MCF 10A (cell line): ENCODE measurements at regions of chr12 and their contacts with region 1.

Region 1: GRCh38 chr12:8890313-8891085 is 23.8 kb upstream of the PHC1 start:
- DNase-seq: peak; percentile 67
- H3K4me3 Mint-ChIP-seq: peak overlapping the region; percentile 83
- H3K27ac Mint-ChIP-seq: peak overlapping the region; percentile 86
- H3K4me1 Mint-ChIP-seq: peaks cover 6% of the 10 kb centered on the region
- H3K27me3 Mint-ChIP-seq: no peaks in the 10 kb centered on the region
- CTCF ChIP-seq: peak; percentile 82

Region 2: DNA sequence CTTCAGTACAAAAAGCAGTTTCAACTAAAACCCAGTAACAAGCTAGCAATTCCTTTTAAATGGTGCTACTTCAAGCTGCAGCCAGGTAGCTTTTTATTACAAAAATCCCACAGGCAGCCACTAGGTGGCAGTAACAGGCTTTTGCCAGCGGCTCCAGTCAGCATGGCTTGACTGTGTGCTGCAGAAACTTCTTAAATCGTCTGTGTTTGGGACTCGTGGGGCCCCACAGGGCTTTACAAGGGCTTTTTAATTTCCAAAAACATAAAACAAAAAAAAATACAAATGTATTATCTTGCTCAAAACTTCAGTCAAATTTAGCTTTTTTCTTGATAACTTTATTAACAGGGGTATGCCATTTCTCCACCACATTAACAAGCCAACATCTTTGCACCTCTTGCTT is 346.2 kb before region 1 on chr12:
- CTCF ChIA-PET with region 1: interaction called, 14 read pairs
- POLR2A ChIA-PET with region 1: no interaction called
- intact Hi-C with region 1: loop called (anchors 5 kb)
- DNase-seq: peak; percentile 56
- H3K4me3 Mint-ChIP-seq: no peak overlapping the region
- H3K27ac Mint-ChIP-seq: no peak overlapping the region
- H3K4me1 Mint-ChIP-seq: no peaks in the 10 kb centered on the region
- H3K27me3 Mint-ChIP-seq: peaks cover 58% of the 10 kb centered on the region
- CTCF ChIP-seq: peak; percentile 84

Region 3: DNA sequence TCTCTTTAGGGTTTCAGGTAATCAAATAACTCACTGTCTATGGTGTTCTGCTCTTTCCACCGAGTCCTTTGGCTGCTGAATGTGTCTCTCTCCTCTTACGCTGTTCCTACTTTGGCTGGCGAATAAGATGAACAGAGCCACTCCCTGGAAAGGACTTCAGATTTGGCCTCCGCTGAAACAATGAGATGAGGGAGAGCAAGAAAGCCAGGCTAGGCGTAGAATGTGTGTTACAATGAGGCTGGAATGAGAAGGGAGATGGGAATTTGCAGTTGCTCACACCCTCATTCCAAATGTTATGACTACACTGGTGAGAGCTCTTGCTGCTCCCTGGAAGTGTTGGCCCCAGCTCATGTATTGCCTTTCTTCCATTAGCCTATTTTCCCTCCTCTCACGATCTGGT is 227.9 kb before region 1 on chr12 and contains the start of gene MFAP5:
- CTCF ChIA-PET with region 1: interaction called, 57 read pairs
- POLR2A ChIA-PET with region 1: no interaction called
- intact Hi-C with region 1: loop called (anchors 1 kb)
- DNase-seq: no peak
- H3K4me3 Mint-ChIP-seq: no peak within 1 kb of the TSS
- H3K27ac Mint-ChIP-seq: no peak within 1 kb of the TSS
- H3K4me1 Mint-ChIP-seq: peaks cover 5% of the 10 kb centered on the region
- H3K27me3 Mint-ChIP-seq: no peaks in the 10 kb centered on the region
- CTCF ChIP-seq: no peak
- total RNA-seq, gene MFAP5: 0.64 and 1.6 TPM in 2 replicates

Region 4: DNA sequence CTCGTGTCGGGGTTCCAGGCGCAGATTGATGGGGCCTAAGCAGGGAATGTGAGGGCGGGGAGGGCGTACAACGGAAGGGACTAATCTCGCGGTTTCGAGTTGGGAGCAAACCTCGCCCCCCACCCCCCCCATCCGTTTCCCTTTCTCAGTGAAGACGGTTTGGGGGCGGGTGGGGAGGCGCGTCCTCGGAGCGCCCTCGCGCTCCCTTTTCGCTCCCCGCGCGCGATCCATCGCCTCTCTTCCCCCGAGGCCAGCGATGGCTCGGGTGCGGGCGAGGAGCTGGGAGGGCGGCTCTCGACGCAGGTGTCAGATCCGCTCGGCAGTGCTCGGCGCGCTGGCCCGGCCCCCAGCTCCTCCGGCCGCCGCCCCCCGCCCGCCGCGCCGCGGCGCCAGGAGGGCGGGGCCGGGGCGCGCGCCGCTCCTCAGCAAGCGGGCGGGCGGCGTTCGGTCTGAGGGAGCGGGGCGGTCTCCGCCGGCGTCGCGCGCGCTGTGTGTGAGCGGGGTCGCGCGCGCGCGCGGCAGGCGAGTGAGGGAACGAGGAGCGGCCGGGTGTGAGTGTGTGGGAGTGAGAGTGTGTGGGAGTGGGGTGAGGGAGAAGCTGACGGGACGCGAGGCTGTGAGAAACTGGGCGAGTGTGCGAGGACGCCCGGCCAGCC is 192.9 kb before region 1 on chr12 and contains the start of gene RIMKLB:
- CTCF ChIA-PET with region 1: interaction called, 12 read pairs
- POLR2A ChIA-PET with region 1: no interaction called
- intact Hi-C with region 1: no loop called
- DNase-seq: peak; percentile 60
- H3K4me3 Mint-ChIP-seq: peak within 1 kb of the TSS; percentile 93
- H3K27ac Mint-ChIP-seq: peak within 1 kb of the TSS; percentile 46
- H3K4me1 Mint-ChIP-seq: peaks cover 13% of the 10 kb centered on the region
- H3K27me3 Mint-ChIP-seq: no peaks in the 10 kb centered on the region
- CTCF ChIP-seq: no peak
- total RNA-seq, gene RIMKLB: 32.7 and 34.4 TPM in 2 replicates

Region 5: DNA sequence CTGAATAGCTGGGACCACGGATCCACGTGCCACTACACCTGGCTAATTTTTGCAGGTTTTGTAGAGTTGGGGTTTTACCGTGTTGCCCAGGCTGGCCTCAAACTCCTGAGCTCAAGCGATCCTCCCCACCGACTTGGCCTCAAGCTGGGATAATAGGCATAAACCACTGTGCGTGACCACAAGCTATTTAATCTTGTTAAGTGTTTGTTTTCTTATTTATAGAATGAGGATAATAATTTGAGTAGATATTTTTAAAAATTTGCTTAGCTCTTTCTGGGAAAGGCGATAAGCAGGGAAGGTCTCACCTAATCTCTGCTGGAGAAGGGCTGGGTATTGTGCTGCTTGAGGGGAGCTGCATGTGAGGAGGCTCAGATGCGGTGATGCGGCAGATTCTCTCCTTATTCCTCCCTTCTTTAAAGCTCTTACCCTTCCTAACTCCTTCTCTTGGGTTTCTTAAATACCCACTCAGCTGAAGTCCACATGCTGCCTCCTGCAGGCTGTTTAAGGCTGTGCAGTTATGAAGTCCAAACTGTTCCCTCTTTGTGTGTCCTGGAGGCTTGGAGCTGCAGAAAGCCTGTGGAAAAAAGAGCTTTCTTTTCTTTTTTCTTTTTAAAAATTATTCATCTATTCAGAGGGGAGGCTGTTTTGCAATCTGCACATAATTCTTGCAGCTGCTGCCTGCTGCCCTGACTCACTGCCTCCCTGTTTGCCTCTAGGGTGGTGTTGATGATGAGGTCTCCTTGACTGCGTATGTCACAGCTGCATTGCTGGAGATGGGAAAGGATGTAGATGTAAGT is 30.1 kb before region 1 on chr12:
- CTCF ChIA-PET with region 1: interaction called, 37 read pairs
- POLR2A ChIA-PET with region 1: interaction called, 3 read pairs
- intact Hi-C with region 1: no loop called
- DNase-seq: peak; percentile 46
- H3K4me3 Mint-ChIP-seq: no peak overlapping the region
- H3K27ac Mint-ChIP-seq: no peak overlapping the region
- H3K4me1 Mint-ChIP-seq: no peaks in the 10 kb centered on the region
- H3K27me3 Mint-ChIP-seq: no peaks in the 10 kb centered on the region
- CTCF ChIP-seq: peak; percentile 41

Region 6: DNA sequence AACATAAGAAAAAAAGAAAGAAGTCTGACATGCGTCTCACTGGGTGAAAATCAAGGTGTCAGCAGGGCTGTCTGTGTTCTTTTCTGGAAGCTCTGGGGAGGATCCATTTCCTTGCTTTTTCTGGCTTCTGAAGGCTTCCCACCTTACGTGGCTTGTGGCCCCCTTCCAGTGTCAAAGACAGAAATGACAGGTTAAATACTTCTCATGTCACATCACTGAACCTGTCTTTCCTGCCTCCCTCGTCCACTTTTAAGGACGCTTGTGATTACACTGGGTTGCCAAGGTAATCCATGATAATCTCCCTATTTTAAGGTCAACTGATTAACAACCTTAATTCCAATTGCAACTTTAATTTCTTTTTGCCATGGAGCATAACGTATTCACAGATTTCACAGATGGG is 19.3 kb after region 1 on chr12:
- CTCF ChIA-PET with region 1: interaction called, 12 read pairs
- POLR2A ChIA-PET with region 1: interaction called, 3 read pairs
- intact Hi-C with region 1: no loop called
- DNase-seq: no peak
- H3K4me3 Mint-ChIP-seq: no peak overlapping the region
- H3K27ac Mint-ChIP-seq: no peak overlapping the region
- H3K4me1 Mint-ChIP-seq: peaks cover 22% of the 10 kb centered on the region
- H3K27me3 Mint-ChIP-seq: no peaks in the 10 kb centered on the region
- CTCF ChIP-seq: no peak